ENCODE measurements at regions of chrX and their contacts with region 1.

Region 1: DNA sequence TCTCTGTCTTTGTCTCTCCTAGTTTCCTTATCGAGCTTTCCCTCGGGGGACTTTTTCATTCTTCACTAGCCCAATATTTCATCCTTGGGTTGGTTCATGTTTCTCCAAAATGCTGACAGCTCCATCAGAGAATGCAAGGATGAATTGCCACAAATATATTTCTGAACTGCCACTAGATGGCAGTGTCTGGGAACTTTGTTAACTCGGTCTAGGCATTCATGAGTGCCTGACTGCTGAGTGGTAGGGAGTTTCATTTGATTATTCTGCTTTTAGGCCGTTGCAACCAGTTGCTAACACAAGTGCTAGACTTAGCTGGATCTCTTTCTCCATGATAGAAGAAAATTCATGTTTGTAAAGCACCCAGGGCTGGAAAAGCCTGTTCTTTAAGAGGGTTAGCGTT is 73.5 kb upstream of the RAP2C start:
- DNase-seq: peak; percentile 61
- H3K4me3 ChIP-seq: no peak overlapping the region
- H3K27ac ChIP-seq: no peak overlapping the region
- H3K4me1 ChIP-seq: no peaks in the 10 kb centered on the region
- CTCF ChIP-seq: peak; percentile 74

Region 2: DNA sequence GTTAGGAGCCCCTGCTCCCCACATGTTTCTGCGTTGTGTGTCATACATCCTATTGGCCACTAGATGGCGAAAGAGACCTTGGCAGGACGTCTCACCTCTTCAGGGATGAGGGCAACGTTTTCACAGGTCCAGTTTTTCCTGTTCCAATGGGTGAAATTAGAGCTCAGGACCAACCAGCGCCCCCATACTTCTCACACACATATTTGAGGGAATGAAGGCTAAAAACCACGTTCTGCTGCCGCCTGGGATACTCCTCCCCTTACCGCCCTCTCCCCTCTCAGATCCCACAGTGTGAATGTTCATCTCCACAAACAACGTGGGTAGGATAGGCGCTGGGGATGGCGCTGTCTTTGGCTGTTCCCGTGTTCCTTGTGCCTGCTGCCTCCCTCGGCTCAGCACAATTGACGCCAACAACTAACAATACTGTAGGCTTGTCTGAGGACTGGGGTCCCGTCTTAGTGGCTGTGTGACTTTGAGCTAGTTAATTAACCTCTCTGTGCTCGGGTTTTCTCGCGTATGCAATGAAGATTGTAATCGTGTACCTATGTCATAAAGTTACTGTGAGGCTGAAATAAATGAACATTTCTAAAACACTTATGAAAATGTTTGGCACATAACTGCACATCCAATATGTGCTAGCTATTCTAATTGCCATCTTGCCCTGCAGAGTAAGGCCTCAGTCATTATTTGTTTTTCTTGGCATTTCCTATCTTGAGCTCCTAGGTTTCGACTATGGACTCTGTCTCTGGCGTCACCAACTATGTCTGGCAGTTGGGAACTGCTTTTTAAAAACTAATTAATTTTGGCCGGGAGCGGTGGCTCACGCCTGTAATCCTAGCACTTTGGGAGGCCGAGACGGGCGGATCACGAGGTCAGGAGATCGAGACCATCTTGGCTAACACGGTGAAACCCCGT is 451.0 kb before region 1 on chrX:
- CTCF ChIA-PET with region 1: no interaction called
- POLR2A ChIA-PET with region 1: no interaction called
- intact Hi-C with region 1: loop called (anchors 5 kb)
- DNase-seq: peak; percentile 52
- H3K4me3 ChIP-seq: no peak overlapping the region
- H3K27ac ChIP-seq: no peak overlapping the region
- H3K4me1 ChIP-seq: no peaks in the 10 kb centered on the region
- CTCF ChIP-seq: peak; percentile 75

Region 3: DNA sequence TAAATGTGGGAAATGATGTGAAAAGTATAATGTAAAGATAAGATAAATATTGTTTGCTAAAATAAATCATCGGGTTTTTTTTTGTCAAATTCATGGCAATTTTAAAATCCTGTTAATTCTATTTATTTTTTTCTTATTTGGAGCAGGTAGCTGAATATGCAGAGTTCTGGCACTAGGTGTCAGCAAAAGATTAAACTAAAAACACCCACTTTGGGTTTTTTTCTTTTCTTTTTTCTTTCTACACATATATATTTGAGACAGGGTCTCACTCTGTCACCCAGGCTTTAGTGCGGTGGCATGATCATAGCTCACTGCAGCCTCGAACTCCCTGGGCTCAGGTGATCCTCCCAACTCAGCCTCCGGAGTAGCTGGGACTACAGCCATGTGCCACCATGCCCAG is 66.6 kb before region 1 on chrX:
- CTCF ChIA-PET with region 1: no interaction called
- POLR2A ChIA-PET with region 1: no interaction called
- intact Hi-C with region 1: loop called (anchors 5 kb)
- DNase-seq: peak; percentile 2
- H3K4me3 ChIP-seq: no peak overlapping the region
- H3K27ac ChIP-seq: no peak overlapping the region
- H3K4me1 ChIP-seq: no peaks in the 10 kb centered on the region
- CTCF ChIP-seq: peak; percentile 71

Region 4: GRCh38 chrX:132488819-132489577 is 196.2 kb after region 1 on chrX and contains the start of gene MBNL3:
- CTCF ChIA-PET with region 1: no interaction called
- POLR2A ChIA-PET with region 1: no interaction called
- intact Hi-C with region 1: loop called (anchors 10 kb)
- DNase-seq: peak; percentile 90
- H3K4me3 ChIP-seq: peak within 1 kb of the TSS; percentile 78
- H3K27ac ChIP-seq: peak within 1 kb of the TSS; percentile 100
- H3K4me1 ChIP-seq: peaks cover 35% of the 10 kb centered on the region
- CTCF ChIP-seq: no peak
- total RNA-seq, gene MBNL3: 31.4 and 39.4 TPM in 2 replicates

Region 5: GRCh38 chrX:132592880-132593279 is 300.1 kb after region 1 on chrX:
- CTCF ChIA-PET with region 1: interaction called, 3 read pairs
- POLR2A ChIA-PET with region 1: no interaction called
- intact Hi-C with region 1: loop called (anchors 5 kb)
- DNase-seq: peak; percentile 22
- H3K4me3 ChIP-seq: no peak overlapping the region
- H3K27ac ChIP-seq: no peak overlapping the region
- H3K4me1 ChIP-seq: no peaks in the 10 kb centered on the region
- CTCF ChIP-seq: peak; percentile 63